Posterior vena cava (tissue), 2 donors: ENCODE measurements at regions of chr4 and their contacts with region 1.

Region 1: GRCh38 chr4:185425647-185426352 is at the start of gene UFSP2:
- DNase-seq: peak; percentile 96
- total RNA-seq, gene UFSP2: 40.3 to 51.8 TPM

Region 2: GRCh38 chr4:183665440-183665839 is 1760.4 kb before region 1 on chr4:
- intact Hi-C with region 1: loop called in 1 of 2 experiments (anchors 5 kb)
- DNase-seq: no peak

Region 3: DNA sequence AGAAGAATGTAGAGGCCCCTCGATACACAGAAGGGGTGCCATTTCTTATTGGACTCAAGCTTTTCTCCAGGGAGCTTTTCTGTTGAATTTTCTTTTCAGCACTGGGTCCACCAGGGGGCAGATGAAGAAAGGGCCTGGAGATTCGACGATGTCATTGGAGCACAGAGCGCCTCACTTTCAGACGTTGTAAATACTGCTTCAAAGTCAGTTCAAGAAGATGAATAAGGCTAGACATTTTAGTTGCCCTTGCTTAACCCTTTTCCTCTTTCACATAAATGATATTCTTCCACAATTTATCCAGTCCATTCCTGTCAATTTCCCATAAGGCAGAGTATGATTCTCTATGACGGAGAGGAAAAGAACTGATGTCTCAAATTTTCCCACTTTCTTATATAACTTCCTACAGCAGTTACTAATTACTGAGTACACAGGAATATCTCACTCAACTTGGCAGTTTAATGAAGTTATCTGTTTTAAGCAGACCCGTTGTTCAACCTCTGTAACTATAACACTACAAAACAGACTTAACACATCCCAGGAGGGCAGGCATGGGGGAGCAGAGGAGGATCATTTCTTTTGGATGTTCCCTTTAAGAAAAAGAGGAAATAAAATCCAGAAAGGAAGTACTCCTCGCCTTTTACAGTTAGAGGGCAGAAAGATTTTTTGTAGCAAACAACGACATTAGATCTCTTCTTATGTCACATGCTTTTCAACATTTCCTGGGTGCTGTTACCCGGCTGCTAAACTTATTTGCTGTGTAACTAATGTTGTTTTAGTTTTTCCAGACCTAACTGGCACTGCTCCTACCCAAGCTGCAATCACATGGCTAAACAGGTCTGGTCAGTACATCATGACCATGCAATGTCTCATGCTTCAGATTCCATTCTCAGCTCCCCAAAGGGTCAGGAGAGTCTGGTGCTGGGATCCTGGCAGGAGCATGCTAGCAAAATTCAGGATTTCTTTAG is 679.7 kb before region 1 on chr4:
- intact Hi-C with region 1: loop called in 1 of 2 experiments (anchors 5 kb)
- DNase-seq: no peak

Region 4: DNA sequence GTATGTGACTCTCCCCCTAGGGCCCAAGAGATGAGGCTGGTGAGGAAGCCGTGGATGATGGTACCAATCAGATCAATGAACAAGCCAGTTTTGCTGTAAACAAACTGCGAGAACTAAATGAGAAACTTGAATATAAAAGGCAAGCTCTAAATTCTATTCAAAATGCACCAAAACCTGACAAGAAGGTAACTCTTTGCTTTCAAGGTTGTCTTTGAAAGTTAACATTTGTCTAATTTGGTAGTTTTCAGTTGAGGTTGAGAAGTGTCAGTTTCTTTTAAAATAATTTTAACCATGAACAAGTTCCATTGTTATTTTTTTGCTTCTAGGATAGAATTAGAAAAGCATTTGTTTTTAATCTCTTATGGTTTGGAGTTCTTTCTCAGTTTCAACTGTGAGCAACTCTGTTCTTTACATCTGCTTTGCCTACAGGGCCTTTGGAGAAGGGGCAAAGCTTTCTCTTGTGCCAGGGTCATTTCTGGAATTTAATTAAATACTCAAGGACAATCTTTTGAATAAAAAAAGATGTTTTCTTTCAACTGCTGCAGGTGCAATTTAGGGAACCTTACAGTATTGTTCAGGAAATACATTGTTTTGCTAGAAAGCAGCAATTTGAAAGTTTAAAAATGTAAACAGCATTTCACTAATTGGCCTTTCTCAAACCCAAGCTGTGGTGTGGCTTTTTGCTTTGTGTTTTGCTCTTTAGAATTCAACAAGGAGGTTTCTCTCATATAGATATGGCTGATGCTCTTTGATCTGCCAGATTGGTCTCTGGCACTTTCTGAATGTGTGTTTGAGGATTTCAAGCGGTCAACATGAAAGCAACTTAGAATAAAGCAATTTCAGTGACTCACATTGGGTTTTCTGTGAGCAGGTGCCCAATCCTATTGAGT is 93.0 kb before region 1 on chr4:
- intact Hi-C with region 1: no loop called
- DNase-seq: no peak

Region 5: GRCh38 chr4:185358514-185358913 is 67.3 kb before region 1 on chr4:
- intact Hi-C with region 1: no loop called
- DNase-seq: no peak

Region 6: GRCh38 chr4:185464184-185464583 is 38.4 kb after region 1 on chr4:
- intact Hi-C with region 1: loop called in 1 of 2 experiments (anchors 5 kb)
- DNase-seq: no peak